ENCODE measurements at regions of chr6 and their contacts with region 1.

Region 1: GRCh38 chr6:12289933-12290820 is at the start of gene EDN1:
- DNase-seq: peak; percentile 63
- ATAC-seq: peak; percentile 77
- H3K4me3 ChIP-seq: peak within 1 kb of the TSS; percentile 32 to 87 (median 55)
- H3K4me3 Mint-ChIP-seq: peak within 1 kb of the TSS; percentile 89
- H3K27ac ChIP-seq: no peak within 1 kb of the TSS
- H3K27ac Mint-ChIP-seq: no peak within 1 kb of the TSS
- H3K4me1 ChIP-seq: peaks cover 7 to 14% of the 10 kb centered on the region in 2 donors
- H3K4me1 Mint-ChIP-seq: peaks cover 17% of the 10 kb centered on the region
- H3K27me3 ChIP-seq: peaks cover 0 to 31% (median 18%) of the 10 kb centered on the region in 4 experiments
- H3K27me3 Mint-ChIP-seq: peaks cover 44% of the 10 kb centered on the region
- CTCF ChIP-seq: peak; percentile 10
- total RNA-seq, gene EDN1: 2.1 and 2.6 TPM in 2 replicates

Region 2: DNA sequence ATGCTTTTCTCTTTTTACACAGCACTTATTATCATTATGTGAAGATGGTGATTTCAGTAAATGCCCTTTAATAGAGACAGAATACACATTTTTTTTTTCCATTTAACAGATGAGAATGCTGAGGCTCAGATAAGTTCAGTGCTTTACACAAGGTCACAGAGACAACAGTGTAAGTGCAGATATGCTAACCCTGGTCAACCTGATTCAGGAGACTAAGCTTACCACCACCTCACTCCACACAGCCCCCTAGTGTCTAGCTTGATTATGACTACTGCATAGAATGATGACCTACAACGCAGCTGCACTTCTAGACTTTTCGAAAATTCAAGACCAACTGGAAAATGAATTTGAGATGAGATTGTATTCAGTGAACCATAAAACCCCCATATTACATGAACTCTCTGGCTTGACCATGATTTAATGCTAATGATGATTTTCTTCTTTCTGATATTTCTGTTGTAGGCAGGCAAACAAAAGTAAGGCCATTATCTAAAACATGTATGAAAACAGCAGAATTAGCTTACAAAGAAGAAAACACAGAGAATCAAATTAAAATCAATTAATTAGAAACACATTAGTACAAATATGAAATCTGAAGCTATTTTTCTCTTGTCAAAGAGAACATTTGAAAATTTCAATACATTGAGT is 214.3 kb after region 1 on chr6:
- CTCF ChIA-PET with region 1: interaction called, 12 read pairs
- POLR2A ChIA-PET with region 1: no interaction called
- intact Hi-C with region 1: no loop called
- DNase-seq: peak; percentile 11
- ATAC-seq: no peak
- H3K4me3 ChIP-seq: no peak overlapping the region
- H3K4me3 Mint-ChIP-seq: no peak overlapping the region
- H3K27ac ChIP-seq: no peak overlapping the region
- H3K27ac Mint-ChIP-seq: no peak overlapping the region
- H3K4me1 ChIP-seq: no peaks in the 10 kb centered on the region
- H3K4me1 Mint-ChIP-seq: no peaks in the 10 kb centered on the region
- H3K27me3 ChIP-seq: peaks cover 0 to 2% (median 0%) of the 10 kb centered on the region in 4 experiments
- H3K27me3 Mint-ChIP-seq: peaks cover 4% of the 10 kb centered on the region
- CTCF ChIP-seq: peak; percentile 46

Measured in B cell (primary cell).